GM12878 (cell line): ENCODE measurements at regions of chr10 and their contacts with region 1.

Region 1: GRCh38 chr10:124221356-124222317 is 128.2 kb upstream of the CHST15 start:
- DNase-seq: peak; percentile 83
- ATAC-seq: peak; percentile 90
- H3K4me3 ChIP-seq: peak overlapping the region; percentile 43; the same call in 1 of the 2 replicates
- H3K27ac ChIP-seq: peak overlapping the region; percentile 81
- H3K4me1 ChIP-seq: peaks cover 31% of the 10 kb centered on the region
- H3K27me3 ChIP-seq: no peaks in the 10 kb centered on the region
- CTCF ChIP-seq: no peak
- EP300 ChIP-seq: peak; percentile 88 to 90; a peak in 3 of 4 replicates
- POLR2A ChIP-seq: 0 out of 2 replicates have a peak, but pooled peaks have one; percentile 25
- RAD21 ChIP-seq: no peak

Region 2: GRCh38 chr10:123848564-123849457 is 372.8 kb before region 1 on chr10:
- CTCF ChIA-PET with region 1: no interaction called
- POLR2A ChIA-PET with region 1: no interaction called
- RAD21 ChIA-PET with region 1: no interaction called
- SMC1A ChIA-PET with region 1: no interaction called
- in situ Hi-C with region 1: loop called (anchors 10 kb)
- intact Hi-C with region 1: no loop called
- DNase-seq: peak; percentile 63
- ATAC-seq: peak; percentile 86
- H3K4me3 ChIP-seq: no peak overlapping the region
- H3K27ac ChIP-seq: peak overlapping the region; percentile 39; the same call in 1 of the 2 replicates
- H3K4me1 ChIP-seq: peaks cover 3% of the 10 kb centered on the region; the same call in 1 of the 2 replicates
- H3K27me3 ChIP-seq: no peaks in the 10 kb centered on the region
- CTCF ChIP-seq: no peak
- EP300 ChIP-seq: peak; percentile 78 to 92
- POLR2A ChIP-seq: no peak
- RAD21 ChIP-seq: no peak

Region 3: DNA sequence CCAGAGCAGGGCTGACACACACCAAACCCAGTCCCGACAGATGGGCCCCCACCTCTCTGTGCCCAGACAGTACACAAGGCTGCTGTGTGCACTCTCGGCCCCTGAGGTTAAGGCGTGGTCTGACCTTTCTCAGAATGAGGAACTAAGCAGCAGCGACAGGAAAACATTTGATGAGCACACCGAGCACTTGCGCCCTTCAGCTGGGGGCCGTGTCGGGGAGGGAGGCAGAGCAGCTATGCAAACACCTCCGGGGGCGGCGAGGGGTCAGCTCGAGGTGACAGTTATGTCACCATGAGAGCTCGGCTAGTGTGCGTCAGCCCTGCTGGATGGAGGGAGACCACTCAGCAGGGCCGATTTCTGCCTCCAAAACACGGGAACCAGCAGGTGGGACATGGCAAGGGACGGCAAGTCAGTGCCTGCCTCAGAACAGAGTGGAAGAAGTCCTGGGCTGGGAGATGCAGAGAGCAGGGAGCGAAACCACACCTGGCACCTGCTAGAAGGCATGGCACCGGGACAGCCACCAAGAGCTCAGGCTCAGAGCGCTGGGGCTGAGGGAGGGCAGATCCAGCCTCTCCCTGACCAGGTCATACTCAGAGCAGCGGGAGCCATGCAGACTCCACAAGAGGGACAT is 185.6 kb before region 1 on chr10:
- CTCF ChIA-PET with region 1: no interaction called
- POLR2A ChIA-PET with region 1: no interaction called
- RAD21 ChIA-PET with region 1: no interaction called
- SMC1A ChIA-PET with region 1: no interaction called
- in situ Hi-C with region 1: no loop called
- intact Hi-C with region 1: loop called (anchors 5 kb)
- DNase-seq: peak; percentile 82
- ATAC-seq: peak; percentile 99
- H3K4me3 ChIP-seq: peak overlapping the region; percentile 37; the same call in 1 of the 2 replicates
- H3K27ac ChIP-seq: no peak overlapping the region
- H3K4me1 ChIP-seq: peaks cover 16% of the 10 kb centered on the region
- H3K27me3 ChIP-seq: no peaks in the 10 kb centered on the region; a peak in 3 of 4 replicates
- CTCF ChIP-seq: no peak
- EP300 ChIP-seq: peak in 1 of 2 experiments; percentile 88; a peak in 3 of 4 replicates
- POLR2A ChIP-seq: peak; percentile 23; the same call in 1 of the 2 replicates
- RAD21 ChIP-seq: no peak

Region 4: DNA sequence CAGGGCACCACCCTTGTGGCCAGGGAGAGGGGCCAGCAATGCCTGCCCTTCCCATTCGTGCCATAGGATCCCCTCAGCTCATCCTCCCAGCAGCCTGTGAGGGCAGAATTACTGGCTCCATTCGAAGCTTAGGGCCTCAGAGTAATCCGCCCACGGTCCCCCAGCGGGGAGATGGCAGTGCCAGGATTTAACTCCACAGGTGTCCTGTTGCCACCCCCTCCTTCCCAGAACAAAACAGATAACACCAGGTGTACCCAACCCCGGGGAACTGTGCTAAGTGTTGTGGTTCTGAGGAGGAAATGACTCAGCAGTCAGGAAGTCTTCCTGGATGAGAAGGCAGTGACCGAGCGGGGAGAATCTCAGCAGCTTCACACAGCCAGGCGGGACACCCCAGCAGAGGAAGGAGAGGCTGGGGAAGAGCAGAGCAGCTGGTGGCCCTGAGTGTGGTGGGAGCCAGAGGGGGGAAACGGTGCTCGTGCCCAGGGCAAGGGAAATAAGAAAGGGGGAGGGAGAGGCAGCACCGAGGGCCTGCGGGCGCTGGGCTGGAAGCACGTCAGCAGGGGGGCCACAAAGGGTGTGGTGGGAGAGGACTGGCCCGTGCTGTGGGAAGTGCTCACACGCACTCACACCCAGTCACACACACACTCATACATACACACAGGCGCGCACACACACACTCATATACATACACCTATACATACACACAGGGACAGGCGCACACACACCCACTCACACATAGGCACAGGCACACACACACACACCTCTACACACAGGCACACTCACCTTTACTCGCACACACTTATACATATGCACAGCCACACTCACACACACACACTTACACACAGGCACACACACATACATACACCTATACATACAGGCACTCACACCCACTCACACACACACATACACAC is 68.5 kb before region 1 on chr10:
- CTCF ChIA-PET with region 1: no interaction called
- POLR2A ChIA-PET with region 1: no interaction called
- RAD21 ChIA-PET with region 1: no interaction called
- SMC1A ChIA-PET with region 1: no interaction called
- in situ Hi-C with region 1: no loop called
- intact Hi-C with region 1: loop called (anchors 1 kb)
- DNase-seq: peak; percentile 65
- ATAC-seq: peak; percentile 82
- H3K4me3 ChIP-seq: peak overlapping the region; percentile 16; the same call in 1 of the 2 replicates
- H3K27ac ChIP-seq: 0 out of 2 replicates have a peak overlapping the region, but pooled peaks have one; percentile 2
- H3K4me1 ChIP-seq: peaks cover 28% of the 10 kb centered on the region
- H3K27me3 ChIP-seq: no peaks in the 10 kb centered on the region; a peak in 1 of 4 replicates
- CTCF ChIP-seq: no peak
- EP300 ChIP-seq: peak; percentile 11 to 67; a peak in 2 of 4 replicates
- POLR2A ChIP-seq: no peak
- RAD21 ChIP-seq: no peak

Region 5: DNA sequence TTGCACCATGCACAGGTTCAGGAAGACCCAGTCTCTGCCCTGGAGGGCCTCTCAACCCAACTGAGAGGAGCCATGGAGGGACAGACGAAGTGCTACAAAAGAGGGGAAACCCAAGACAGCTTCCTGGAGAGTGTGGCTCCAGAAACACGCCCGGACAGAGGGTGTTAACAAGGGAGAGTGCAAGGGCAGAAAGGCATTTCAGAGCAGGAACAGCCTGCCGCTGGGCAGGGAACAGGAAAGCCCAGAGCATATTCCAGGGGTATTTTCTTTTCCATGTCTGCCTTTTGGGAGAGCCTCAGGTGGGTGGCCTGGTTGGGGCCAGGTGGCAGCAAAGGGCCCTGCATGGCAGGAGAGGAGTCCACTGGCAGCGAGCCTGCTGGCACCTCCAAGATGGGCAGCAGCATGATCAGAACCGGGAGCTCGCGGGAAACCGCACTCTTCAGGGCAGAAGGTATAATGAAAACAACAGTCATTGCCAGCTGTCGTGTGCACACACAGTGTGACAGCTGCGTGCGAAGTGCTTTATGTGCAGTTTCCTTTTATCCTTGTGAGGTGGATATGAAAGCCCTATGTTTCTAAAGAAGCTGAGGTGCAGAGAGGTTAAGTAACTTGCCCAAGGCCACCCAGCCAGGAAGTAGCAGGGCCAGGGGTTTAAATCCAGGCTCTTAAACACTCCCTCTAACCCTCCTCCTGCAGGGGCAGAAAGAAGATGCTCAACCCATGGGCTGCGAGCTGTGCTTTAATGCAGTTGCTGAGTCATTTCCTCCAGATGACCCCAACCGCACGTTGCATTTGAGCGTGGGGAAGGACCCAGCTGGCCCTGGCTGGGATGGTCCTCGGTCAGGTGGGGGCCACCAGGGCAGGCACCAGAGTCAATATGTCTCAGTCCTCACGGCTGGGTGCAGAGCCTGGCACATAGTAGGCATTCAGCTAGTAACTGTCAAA is 68.5 kb after region 1 on chr10:
- CTCF ChIA-PET with region 1: interaction called, 6 read pairs
- POLR2A ChIA-PET with region 1: interaction called, 9 read pairs
- RAD21 ChIA-PET with region 1: interaction called, 18 read pairs
- SMC1A ChIA-PET with region 1: interaction called, 13 read pairs
- in situ Hi-C with region 1: no loop called
- intact Hi-C with region 1: loop called (anchors 2 kb)
- DNase-seq: peak; percentile 80
- ATAC-seq: peak; percentile 76
- H3K4me3 ChIP-seq: no peak overlapping the region
- H3K27ac ChIP-seq: peak overlapping the region; percentile 68
- H3K4me1 ChIP-seq: peaks cover 55% of the 10 kb centered on the region
- H3K27me3 ChIP-seq: no peaks in the 10 kb centered on the region
- CTCF ChIP-seq: no peak
- EP300 ChIP-seq: peak; percentile 56 to 85
- POLR2A ChIP-seq: no peak
- RAD21 ChIP-seq: no peak

Region 6: GRCh38 chr10:124470544-124471434 is 249.2 kb after region 1 on chr10:
- CTCF ChIA-PET with region 1: no interaction called
- POLR2A ChIA-PET with region 1: no interaction called
- RAD21 ChIA-PET with region 1: no interaction called
- SMC1A ChIA-PET with region 1: no interaction called
- in situ Hi-C with region 1: no loop called
- intact Hi-C with region 1: no loop called
- DNase-seq: no peak
- ATAC-seq: no peak
- H3K4me3 ChIP-seq: no peak overlapping the region
- H3K27ac ChIP-seq: no peak overlapping the region
- H3K4me1 ChIP-seq: peaks cover 2% of the 10 kb centered on the region
- H3K27me3 ChIP-seq: no peaks in the 10 kb centered on the region
- CTCF ChIP-seq: no peak
- EP300 ChIP-seq: no peak
- POLR2A ChIP-seq: no peak
- RAD21 ChIP-seq: no peak